Ovary (tissue), 10 donors: ENCODE measurements at regions of chr17 and their contacts with region 1.

Region 1: DNA sequence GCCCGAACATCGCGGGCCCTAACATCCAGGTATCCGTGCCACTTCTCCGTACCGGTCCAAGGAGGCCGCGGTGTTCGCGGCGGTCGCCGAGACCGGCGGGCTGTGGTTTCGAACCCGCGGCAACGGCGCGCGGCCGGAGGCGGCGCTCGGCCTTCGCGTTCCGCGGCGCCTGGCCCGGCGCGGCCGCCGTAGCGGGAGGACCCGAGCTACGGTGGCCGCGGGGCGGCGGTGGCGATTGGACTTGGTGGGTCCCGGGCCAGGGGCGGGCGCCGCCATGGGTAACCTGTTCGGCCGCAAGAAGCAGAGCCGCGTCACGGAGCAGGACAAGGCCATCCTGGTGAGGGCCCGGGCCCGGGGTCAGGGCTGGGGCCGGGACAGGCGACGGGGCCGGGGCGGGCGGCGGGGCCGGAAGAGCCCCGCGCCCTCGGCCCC is at the start of gene CHMP6:
- DNase-seq: peak; percentile 71 to 88 (median 82)
- H3K4me3 ChIP-seq: peak within 1 kb of the TSS; percentile 84
- H3K27ac ChIP-seq: peak within 1 kb of the TSS; percentile 67 to 85
- H3K4me1 ChIP-seq: peaks cover 6% of the 10 kb centered on the region
- H3K27me3 ChIP-seq: no peaks in the 10 kb centered on the region
- CTCF ChIP-seq: peak in 2 of 3 donors; percentile 78 to 83
- EP300 ChIP-seq: no peak
- POLR2A ChIP-seq: no peak
- total RNA-seq, gene CHMP6: 18.5 to 29.7 (median 26.5) TPM

Region 2: GRCh38 chr17:81094509-81095382 is 103.1 kb after region 1 on chr17:
- intact Hi-C with region 1: loop called in 3 of 4 experiments (anchors 2 to 5 kb)
- DNase-seq: peak; percentile 78 to 85 (median 81)
- H3K4me3 ChIP-seq: no peak overlapping the region
- H3K27ac ChIP-seq: peak overlapping the region; percentile 2 to 81
- H3K4me1 ChIP-seq: peaks cover 10% of the 10 kb centered on the region
- H3K27me3 ChIP-seq: no peaks in the 10 kb centered on the region
- CTCF ChIP-seq: no peak
- EP300 ChIP-seq: no peak
- POLR2A ChIP-seq: no peak

Region 3: GRCh38 chr17:81101614-81102306 is 110.1 kb after region 1 on chr17:
- intact Hi-C with region 1: loop called in 3 of 4 experiments (anchors 2 to 5 kb)
- DNase-seq: peak; percentile 60 to 86 (median 78)
- H3K4me3 ChIP-seq: no peak overlapping the region
- H3K27ac ChIP-seq: no peak overlapping the region
- H3K4me1 ChIP-seq: peaks cover 5% of the 10 kb centered on the region
- H3K27me3 ChIP-seq: no peaks in the 10 kb centered on the region
- CTCF ChIP-seq: peak; percentile 97 to 98 (median 97)
- EP300 ChIP-seq: no peak
- POLR2A ChIP-seq: no peak

Region 4: GRCh38 chr17:81238817-81239600 is 247.3 kb after region 1 on chr17 and contains the starts of genes NDUFAF8 and TEPSIN:
- intact Hi-C with region 1: loop called in 1 of 4 experiments (anchors 10 kb)
- DNase-seq: peak; percentile 97 to 98 (median 97)
- H3K4me3 ChIP-seq: peak within 1 kb of the TSS; percentile 99
- H3K27ac ChIP-seq: peak within 1 kb of the TSS in 1 of 2 donors; percentile 82
- H3K4me1 ChIP-seq: peaks cover 5% of the 10 kb centered on the region
- H3K27me3 ChIP-seq: no peaks in the 10 kb centered on the region
- CTCF ChIP-seq: peak in 2 of 3 donors; percentile 27 to 45
- EP300 ChIP-seq: no peak
- POLR2A ChIP-seq: peak; percentile 36
- total RNA-seq, gene NDUFAF8: 26.6 to 66.3 (median 33.9) TPM
- total RNA-seq, gene TEPSIN: 15.8 to 30.2 (median 25.3) TPM